Activated CD4-positive, alpha-beta T cell treated with anti-CD3 and anti-CD28 coated beads, Interleukin-2, amount 10 ng/mL, durations not matched to agents 24 days and 14 days (primary cell): ENCODE measurements at regions of chr6 and their contacts with region 1.

Region 1: GRCh38 chr6:28838634-28839442 is 84.9 kb downstream of the TRIM27 start:
- DNase-seq: peak; percentile 94
- H3K4me3 Mint-ChIP-seq: peak overlapping the region; percentile 98
- H3K27ac Mint-ChIP-seq: peak overlapping the region; percentile 81
- H3K4me1 Mint-ChIP-seq: peaks cover 16% of the 10 kb centered on the region
- H3K27me3 Mint-ChIP-seq: peaks cover 44% of the 10 kb centered on the region

Region 2: GRCh38 chr6:28880894-28881780 is 42.3 kb after region 1 on chr6:
- intact Hi-C with region 1: loop called (anchors 5 kb)
- DNase-seq: peak; percentile 85
- H3K4me3 Mint-ChIP-seq: peak overlapping the region; percentile 61
- H3K27ac Mint-ChIP-seq: peak overlapping the region; percentile 34
- H3K4me1 Mint-ChIP-seq: peaks cover 26% of the 10 kb centered on the region
- H3K27me3 Mint-ChIP-seq: peaks cover 29% of the 10 kb centered on the region

Region 3: DNA sequence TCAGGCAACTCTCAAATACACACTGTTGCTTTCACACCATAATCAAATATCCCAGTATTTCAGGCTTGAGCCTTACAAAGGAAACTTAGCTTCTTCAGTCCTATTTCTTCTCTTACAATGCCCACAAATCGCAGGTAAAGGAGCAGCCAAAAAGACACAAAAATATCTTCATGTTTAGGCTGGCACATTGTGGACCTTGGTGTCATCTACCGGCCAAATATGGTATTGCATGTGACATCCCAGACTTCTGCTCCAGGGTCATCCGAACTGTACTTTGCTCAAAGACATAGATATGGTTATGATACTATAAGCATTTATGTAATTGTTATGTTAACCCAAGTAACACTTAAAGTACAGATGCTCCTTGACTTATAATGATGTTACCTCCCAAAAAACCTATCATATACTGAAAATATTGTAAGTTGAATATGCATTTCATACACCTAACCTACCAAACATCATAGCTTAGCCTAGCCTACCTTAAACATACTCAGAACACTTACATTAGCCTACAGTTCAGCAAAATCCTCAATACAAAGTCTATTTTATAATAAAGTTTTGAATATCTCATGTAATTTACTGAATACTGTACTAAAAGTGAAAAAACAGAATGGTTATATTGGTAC is 750.7 kb after region 1 on chr6:
- intact Hi-C with region 1: loop called (anchors 10 kb)
- DNase-seq: peak; percentile 86
- H3K4me3 Mint-ChIP-seq: no peak overlapping the region
- H3K27ac Mint-ChIP-seq: no peak overlapping the region
- H3K4me1 Mint-ChIP-seq: no peaks in the 10 kb centered on the region
- H3K27me3 Mint-ChIP-seq: peaks cover 43% of the 10 kb centered on the region